ENCODE measurements at regions of chr3 and their contacts with region 1.

Region 1: DNA sequence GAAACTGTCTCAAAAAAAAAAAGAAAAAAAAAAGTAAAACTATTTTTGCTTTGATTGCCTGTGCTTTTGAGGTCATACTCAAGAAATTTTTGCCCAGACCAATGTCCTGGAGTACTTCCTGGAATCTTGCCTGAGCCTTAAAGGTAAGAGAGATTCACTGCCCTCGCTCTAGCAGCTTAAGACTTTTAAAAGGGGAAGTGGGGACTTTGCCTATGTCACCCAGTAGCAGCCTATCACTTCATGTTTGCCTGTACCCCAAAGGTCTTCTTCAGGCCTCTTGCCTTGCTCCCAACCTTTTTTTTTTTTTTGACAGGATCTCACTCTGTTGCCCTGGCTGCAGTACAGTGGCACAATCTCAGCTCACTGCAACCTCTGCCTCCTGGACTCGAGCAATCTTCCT is 18.9 kb upstream of the GOLGB1 start:
- DNase-seq: no peak
- ATAC-seq: peak; percentile 82
- H3K4me3 Mint-ChIP-seq: no peak overlapping the region
- H3K27ac Mint-ChIP-seq: peak overlapping the region; percentile 46
- H3K4me1 Mint-ChIP-seq: peaks cover 5% of the 10 kb centered on the region
- H3K27me3 Mint-ChIP-seq: no peaks in the 10 kb centered on the region
- CTCF ChIP-seq: no peak

Region 2: GRCh38 chr3:122598556-122598955 is 830.1 kb after region 1 on chr3:
- CTCF ChIA-PET with region 1: no interaction called
- POLR2A ChIA-PET with region 1: interaction called, 10 read pairs
- intact Hi-C with region 1: no loop called
- DNase-seq: no peak
- ATAC-seq: peak; percentile 68
- H3K4me3 Mint-ChIP-seq: no peak overlapping the region
- H3K27ac Mint-ChIP-seq: peak overlapping the region; percentile 74
- H3K4me1 Mint-ChIP-seq: peaks cover 68% of the 10 kb centered on the region
- H3K27me3 Mint-ChIP-seq: no peaks in the 10 kb centered on the region
- CTCF ChIP-seq: no peak